ENCODE measurements at regions of chr7 and their contacts with region 1.

Region 1: DNA sequence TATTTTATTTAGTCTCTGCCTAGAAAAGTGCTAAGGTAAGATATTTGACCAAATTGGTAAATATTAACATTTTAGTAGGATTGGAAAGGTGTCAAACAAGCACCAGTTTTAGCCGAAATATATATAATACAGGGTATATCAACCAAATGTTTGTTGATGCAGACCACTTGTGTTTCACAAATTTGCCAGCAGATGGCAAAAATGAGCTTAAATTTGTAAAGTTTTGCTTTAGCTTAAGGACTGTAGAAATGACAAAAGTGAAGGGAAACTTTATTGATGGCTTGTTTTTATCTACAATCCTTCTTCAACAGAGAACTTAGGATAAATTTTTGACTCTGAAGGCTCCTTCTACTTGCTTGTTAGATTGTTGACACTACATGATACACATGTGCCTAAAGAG is 4.8 kb upstream of the POLR1F start:
- DNase-seq: peak; percentile 22
- ATAC-seq: no peak
- H3K4me3 ChIP-seq: no peak overlapping the region
- H3K27ac ChIP-seq: no peak overlapping the region
- H3K4me1 ChIP-seq: peaks cover 6% of the 10 kb centered on the region; the same call in 1 of the 2 replicates
- H3K27me3 ChIP-seq: peaks cover 3% of the 10 kb centered on the region; the same call in 1 of the 2 replicates
- CTCF ChIP-seq: peak; percentile 65; the same call in 1 of the 2 replicates

Region 2: GRCh38 chr7:18541181-18541870 is 1172.3 kb before region 1 on chr7:
- CTCF ChIA-PET with region 1: interaction called, 10 read pairs
- POLR2A ChIA-PET with region 1: no interaction called
- in situ Hi-C with region 1: no loop called
- intact Hi-C with region 1: no loop called
- DNase-seq: no peak
- ATAC-seq: peak; percentile 79
- H3K4me3 ChIP-seq: peak overlapping the region in 1 of 2 experiments; percentile 19; a peak in 1 of 4 replicates
- H3K27ac ChIP-seq: peak overlapping the region; percentile 82
- H3K4me1 ChIP-seq: peaks cover 18% of the 10 kb centered on the region
- H3K27me3 ChIP-seq: no peaks in the 10 kb centered on the region
- CTCF ChIP-seq: no peak

Region 3: DNA sequence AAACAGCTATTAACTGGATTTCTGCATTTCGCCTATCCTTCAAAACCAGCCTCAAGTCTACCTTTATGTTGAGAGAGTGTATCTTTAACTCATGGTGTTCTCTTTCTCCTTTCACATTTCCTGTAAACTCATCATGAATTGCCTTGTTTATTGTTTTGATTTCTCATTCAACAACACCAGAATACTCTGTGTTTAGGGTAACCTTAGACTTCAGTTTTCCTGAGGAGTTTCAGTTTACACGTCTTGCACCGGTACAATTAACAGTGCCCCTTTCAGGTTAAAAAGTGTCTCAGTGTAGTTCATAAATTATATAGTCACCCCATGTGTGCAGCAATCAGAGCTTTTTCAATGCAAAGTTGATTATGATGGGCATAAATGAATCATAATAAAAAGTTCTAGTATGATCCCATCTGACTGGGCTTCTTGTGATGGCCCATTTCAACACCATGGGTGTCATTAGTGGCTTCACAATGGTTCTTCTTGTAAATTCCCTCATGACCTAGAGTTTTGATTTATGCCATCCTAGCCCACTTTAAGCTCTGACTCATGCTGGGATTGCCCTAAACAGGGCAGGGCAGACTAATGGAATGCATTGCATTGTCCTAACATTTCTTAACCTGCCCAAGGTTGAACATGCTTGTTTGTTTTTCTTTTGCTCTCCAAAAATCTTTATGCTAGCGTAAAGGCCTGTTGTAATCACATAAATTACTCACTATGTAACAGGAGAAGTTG is 639.1 kb after region 1 on chr7:
- CTCF ChIA-PET with region 1: no interaction called
- POLR2A ChIA-PET with region 1: interaction called, 16 read pairs
- in situ Hi-C with region 1: no loop called
- intact Hi-C with region 1: no loop called
- DNase-seq: no peak
- ATAC-seq: peak; percentile 79
- H3K4me3 ChIP-seq: peak overlapping the region in 1 of 2 experiments; percentile 2; a peak in 1 of 4 replicates
- H3K27ac ChIP-seq: peak overlapping the region; percentile 35
- H3K4me1 ChIP-seq: peaks cover 21% of the 10 kb centered on the region
- H3K27me3 ChIP-seq: no peaks in the 10 kb centered on the region
- CTCF ChIP-seq: no peak

Region 4: GRCh38 chr7:20440472-20441105 is 726.9 kb after region 1 on chr7:
- CTCF ChIA-PET with region 1: no interaction called
- POLR2A ChIA-PET with region 1: no interaction called
- in situ Hi-C with region 1: no loop called
- intact Hi-C with region 1: no loop called
- DNase-seq: peak; percentile 10
- ATAC-seq: no peak
- H3K4me3 ChIP-seq: no peak overlapping the region
- H3K27ac ChIP-seq: no peak overlapping the region
- H3K4me1 ChIP-seq: no peaks in the 10 kb centered on the region
- H3K27me3 ChIP-seq: no peaks in the 10 kb centered on the region
- CTCF ChIP-seq: peak; percentile 75

Measured in Panc1 (cell line).